ENCODE measurements at regions of chr14 and their contacts with region 1.

Region 1: GRCh38 chr14:22929104-22929847 is at the start of gene PRMT5:
- DNase-seq: peak; percentile 94
- CTCF ChIP-seq: no peak

Region 2: GRCh38 chr14:22781586-22781991 is 147.7 kb before region 1 on chr14:
- CTCF ChIA-PET with region 1: no interaction called
- POLR2A ChIA-PET with region 1: no interaction called
- DNase-seq: no peak
- CTCF ChIP-seq: no peak

Region 3: DNA sequence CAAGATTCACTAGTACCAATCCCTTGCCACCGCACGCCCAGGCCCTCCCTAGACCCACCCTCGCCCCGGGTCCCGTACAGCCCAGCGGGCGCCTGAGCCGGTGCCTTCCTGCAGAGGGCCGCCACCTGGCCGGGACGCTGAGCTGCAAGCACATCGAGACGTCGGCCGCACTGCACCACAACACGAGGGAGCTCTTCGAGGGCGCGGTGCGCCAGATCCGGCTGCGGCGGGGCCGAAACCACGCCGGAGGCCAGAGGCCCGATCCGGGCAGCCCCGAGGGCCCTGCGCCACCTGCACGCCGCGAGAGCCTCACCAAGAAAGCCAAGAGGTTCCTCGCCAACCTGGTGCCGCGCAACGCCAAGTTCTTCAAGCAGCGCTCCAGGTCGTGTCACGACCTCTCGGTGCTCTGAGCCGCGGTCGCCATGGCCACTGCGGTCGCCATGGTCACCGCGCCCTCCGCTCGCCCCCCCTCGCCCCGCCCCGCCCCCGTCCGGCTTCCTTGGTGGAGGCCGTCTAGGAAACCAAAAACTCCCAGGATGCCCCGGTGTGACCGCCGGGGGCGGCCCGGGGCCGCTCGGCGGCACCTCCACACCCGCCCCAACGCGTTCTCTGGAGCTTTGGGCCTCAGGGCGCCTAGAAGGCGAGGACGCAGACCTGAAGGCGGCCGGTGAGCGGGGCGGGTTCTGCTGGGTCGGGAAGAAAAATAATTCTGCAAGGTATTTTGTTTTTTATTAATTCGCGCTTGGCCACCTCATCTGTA is 42.6 kb before region 1 on chr14:
- CTCF ChIA-PET with region 1: interaction called, 10 read pairs
- POLR2A ChIA-PET with region 1: no interaction called
- DNase-seq: peak; percentile 89
- CTCF ChIP-seq: peak; percentile 40

Region 4: DNA sequence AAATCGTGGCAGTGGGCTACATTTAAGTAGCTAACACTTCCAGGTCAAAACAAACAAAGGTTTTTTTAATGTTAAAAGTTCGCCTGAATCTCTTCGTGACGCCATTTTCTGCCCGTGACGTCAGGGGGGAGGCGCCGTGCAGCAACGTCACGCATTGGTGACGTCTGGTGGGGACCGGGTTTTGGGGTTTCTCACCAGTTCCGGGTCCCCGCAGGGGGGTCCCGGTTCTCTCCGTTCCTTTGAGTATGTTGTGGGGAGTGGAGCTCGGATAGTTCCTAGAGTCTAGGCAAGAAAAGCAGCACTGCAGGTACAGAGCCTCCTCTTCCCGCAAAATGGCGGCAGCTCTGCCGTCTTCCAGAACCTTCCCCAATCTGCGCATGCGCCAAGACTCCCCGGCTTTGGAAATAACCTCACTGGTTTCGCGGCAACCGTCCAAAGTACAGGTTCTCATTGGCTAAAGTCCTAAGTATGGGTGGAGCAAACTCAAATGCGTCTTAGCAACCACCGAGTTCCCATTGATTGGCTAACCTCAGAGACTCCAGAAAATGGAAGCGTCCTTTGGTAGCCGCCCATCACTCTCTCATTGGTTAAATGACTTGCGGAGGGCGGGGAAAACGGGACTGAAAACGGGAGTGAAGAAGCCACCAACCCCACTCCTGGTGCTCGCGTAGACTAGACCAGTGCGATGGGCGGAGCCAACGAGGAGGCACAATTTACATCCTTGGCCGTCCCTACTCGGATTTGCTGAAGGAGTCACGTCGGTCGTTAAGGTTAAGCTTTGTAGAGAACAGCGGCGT is 10.3 kb before region 1 on chr14 and contains the start of gene RBM23:
- CTCF ChIA-PET with region 1: interaction called, 63 read pairs
- POLR2A ChIA-PET with region 1: interaction called, 22 read pairs
- DNase-seq: peak; percentile 94
- CTCF ChIP-seq: no peak

Region 5: GRCh38 chr14:22945642-22946041 is 16.4 kb after region 1 on chr14:
- CTCF ChIA-PET with region 1: interaction called, 44 read pairs
- POLR2A ChIA-PET with region 1: interaction called, 4 read pairs
- DNase-seq: no peak
- CTCF ChIP-seq: no peak

Region 6: GRCh38 chr14:22966783-22967269 is 37.5 kb after region 1 on chr14:
- CTCF ChIA-PET with region 1: interaction called, 13 read pairs
- POLR2A ChIA-PET with region 1: no interaction called
- DNase-seq: no peak
- CTCF ChIP-seq: no peak

Region 7: GRCh38 chr14:22994762-22995275 is 65.5 kb after region 1 on chr14:
- CTCF ChIA-PET with region 1: interaction called, 13 read pairs
- POLR2A ChIA-PET with region 1: no interaction called
- DNase-seq: peak; percentile 45
- CTCF ChIP-seq: peak; percentile 63

Region 8: DNA sequence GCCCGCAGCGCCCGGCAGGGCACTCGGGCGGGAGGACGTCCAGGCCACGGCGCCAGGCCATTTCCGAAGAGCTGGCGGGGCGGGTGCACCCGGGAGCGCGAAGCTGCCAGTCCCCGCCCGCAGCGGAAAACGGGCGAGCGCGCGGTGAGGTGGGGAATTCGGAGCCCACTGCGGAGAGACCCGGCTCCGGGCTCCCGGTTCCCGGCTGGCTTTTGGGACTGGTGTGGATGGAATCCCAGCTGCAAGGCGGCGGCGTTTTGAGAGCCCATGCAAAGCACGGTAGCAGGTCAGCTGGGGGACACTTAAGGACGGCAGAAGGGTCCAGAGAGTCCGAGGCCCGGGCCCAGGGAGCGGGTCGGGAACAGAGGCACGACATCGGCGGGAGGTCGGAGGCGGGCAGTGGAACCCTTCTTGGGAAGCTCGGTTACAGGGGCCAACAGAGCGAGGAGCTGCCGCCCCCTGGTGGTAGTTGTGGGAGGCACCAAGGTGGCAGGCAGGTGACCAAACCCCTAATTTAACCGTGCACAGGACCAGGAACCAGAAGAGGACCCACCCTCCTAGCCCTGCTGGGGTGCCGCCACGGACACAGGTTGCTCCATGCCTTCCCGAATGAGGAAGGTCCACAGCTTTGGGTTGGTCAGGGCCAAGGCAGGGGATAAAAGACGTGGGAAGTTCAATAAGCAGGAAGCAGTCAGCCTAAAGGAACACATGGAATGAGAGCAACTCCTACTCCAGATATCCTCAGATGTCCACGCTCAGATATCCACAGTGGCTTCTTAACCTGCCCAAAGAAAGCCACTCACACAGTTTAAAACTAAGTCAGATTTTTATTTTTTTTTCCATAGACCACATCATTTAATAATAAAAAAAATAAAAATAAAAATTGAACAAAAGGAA is 128.7 kb after region 1 on chr14:
- CTCF ChIA-PET with region 1: interaction called, 23 read pairs
- POLR2A ChIA-PET with region 1: no interaction called
- DNase-seq: peak; percentile 90
- CTCF ChIP-seq: peak; percentile 96